GM18951 (cell line): ENCODE measurements at regions of chr12 and their contacts with region 1.

Region 1: DNA sequence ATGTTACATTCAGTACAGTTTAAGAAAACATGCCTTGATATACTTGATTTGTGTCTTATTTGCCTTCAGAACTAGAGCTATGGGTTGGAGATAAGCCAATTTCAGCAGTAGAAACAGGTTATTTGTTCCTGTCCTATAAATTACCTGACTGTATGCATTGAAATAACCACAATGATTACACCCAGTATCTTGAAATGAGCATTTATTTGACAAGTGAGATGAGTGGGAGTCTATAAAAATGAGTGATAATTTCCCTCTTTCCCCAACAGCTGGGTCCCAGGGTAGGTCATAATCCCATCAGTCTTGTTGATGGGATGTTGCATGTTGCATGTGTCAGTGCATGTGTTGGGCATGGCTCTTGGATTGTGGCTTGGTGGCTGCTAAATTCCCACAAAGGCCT is 3.7 kb downstream of the TAS2R42 start:
- POLR2A ChIP-seq: no peak

Region 2: GRCh38 chr12:10749700-10750384 is 433.2 kb before region 1 on chr12:
- in situ Hi-C with region 1: loop called (anchors 25 kb)
- POLR2A ChIP-seq: no peak